PC-9 (cell line): ENCODE measurements at regions of chr7 and their contacts with region 1.

Region 1: DNA sequence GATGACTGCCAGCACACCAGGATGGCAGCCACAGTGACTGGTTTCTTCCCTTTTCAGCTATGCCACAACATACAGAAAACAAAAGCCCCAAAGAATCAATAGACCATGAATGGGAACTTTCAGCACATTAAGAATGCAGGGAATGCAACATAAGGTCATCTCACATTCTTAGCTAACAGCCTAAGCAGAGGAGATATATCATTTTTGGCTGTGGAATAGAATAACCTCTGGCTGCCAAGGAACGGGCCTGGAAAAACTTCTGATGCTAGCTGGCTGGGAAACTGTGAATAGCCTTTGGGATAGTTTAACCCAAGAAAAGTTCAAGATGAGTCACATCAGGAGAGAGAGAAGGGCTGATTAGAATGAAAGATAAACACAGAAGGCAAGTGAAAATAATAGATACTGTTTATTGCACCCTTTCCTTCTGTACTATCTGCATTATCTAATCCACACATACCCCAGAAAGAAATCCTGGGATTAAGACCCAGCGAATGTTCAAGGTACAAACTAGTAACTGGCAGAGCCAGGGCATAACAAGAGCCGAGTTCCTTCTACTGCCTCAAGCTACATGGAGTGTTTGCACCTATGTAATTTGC is 169.2 kb downstream of the SEMA3A start:
- DNase-seq: peak; percentile 77 to 96
- H3K4me3 ChIP-seq: no peak overlapping the region
- H3K27ac ChIP-seq: peak overlapping the region; percentile 80
- H3K4me1 ChIP-seq: peaks cover 42% of the 10 kb centered on the region
- H3K27me3 ChIP-seq: no peaks in the 10 kb centered on the region
- CTCF ChIP-seq: no peak

Region 2: DNA sequence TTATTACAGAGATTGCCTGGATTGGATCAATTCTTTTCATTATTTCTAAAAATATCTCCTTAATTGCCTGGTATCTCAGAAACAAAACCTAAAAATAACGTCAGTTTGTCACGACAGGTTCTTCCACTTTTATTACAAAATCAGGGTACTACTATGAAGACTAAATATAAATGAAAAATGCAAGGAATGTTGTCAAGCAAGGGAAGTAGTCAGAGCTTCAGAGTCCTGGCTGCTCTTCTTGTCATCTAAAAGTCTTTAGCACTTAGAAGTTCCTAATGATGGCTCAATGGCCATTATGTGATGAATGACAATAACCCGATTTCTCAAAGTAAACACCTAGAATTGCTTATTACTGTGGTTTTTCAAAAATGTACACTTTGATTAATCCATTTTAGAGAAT is 23.1 kb before region 1 on chr7:
- CTCF ChIA-PET with region 1: no interaction called
- POLR2A ChIA-PET with region 1: no interaction called
- intact Hi-C with region 1: loop called (anchors 2 kb)
- DNase-seq: peak in 1 of 2 experiments; percentile 87
- H3K4me3 ChIP-seq: 0 out of 2 replicates have a peak overlapping the region, but pooled peaks have one; percentile 18
- H3K27ac ChIP-seq: peak overlapping the region; percentile 56; the same call in 1 of the 2 replicates
- H3K4me1 ChIP-seq: peaks cover 29% of the 10 kb centered on the region
- H3K27me3 ChIP-seq: no peaks in the 10 kb centered on the region
- CTCF ChIP-seq: no peak

Region 3: DNA sequence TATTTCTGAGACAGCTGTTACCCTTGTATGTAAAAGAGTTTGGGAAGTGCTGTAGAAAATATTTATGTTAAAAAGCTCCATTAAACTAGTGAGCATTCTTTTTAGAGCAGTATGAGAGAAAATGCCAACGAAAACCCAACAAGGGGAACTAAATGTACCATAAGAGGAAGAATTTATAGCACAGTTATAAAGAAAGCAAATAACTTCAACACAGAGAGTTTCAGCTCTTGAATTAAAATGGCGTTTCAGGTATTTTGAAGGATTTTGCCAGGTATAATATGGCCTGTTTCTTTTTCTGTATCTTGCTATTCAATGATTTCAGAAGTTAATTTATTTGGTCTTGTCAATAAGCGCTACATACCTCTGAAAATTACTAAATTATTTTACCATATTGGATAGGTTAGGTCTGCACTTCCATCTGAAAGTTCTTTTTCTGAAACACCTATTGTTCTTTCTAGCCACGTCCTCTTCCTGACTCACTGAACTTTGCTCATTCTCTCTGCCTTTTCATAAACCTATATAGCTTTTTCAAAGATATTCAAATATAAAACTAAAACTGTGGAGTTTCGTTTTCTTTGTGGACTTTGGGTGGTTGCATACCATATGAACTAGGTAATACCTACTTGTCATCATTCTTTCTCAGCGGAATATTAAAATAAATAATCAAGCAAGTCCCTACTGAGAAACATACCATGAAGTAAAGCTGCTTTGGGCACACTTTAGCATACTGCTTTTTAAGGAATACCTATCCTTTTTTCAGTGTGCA is 33.1 kb after region 1 on chr7:
- CTCF ChIA-PET with region 1: no interaction called
- POLR2A ChIA-PET with region 1: no interaction called
- intact Hi-C with region 1: loop called (anchors 1 kb)
- DNase-seq: no peak
- H3K4me3 ChIP-seq: no peak overlapping the region
- H3K27ac ChIP-seq: 0 out of 2 replicates have a peak overlapping the region, but pooled peaks have one; percentile 1
- H3K4me1 ChIP-seq: peaks cover 28% of the 10 kb centered on the region
- H3K27me3 ChIP-seq: no peaks in the 10 kb centered on the region
- CTCF ChIP-seq: no peak

Region 4: DNA sequence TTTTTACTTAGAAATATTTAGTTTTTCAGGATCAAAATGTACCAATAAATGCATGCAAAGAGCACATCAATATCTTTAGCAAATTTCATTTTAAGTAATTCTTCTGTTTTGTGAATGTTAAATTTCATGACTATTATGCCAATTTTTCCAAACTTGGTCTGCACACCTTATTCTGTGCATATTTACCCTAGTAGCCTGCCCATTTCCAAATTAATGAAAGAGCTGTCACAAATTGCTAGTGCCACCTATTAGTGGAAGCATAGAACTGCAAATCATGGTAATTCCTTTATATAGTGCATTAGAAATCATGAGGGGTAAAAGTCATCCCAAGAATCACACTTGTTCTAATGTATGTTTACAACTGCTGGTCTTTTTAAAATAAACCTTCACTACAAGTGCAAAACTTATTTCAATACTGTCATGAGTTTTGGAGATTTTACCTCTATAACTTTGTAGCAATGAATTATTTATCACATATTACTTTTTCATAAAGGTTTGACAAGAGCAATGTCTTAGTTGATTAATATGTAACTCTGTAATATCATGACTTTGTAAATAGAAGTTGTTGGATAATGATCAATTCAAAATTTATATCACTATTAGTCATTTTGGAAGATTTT is 163.5 kb after region 1 on chr7:
- CTCF ChIA-PET with region 1: interaction called, 3 read pairs
- POLR2A ChIA-PET with region 1: no interaction called
- intact Hi-C with region 1: loop called (anchors 1 kb)
- DNase-seq: no peak
- H3K4me3 ChIP-seq: no peak overlapping the region
- H3K27ac ChIP-seq: peak overlapping the region; percentile 81
- H3K4me1 ChIP-seq: peaks cover 18% of the 10 kb centered on the region
- H3K27me3 ChIP-seq: no peaks in the 10 kb centered on the region
- CTCF ChIP-seq: peak; percentile 37; the same call in 1 of the 2 replicates

Region 5: GRCh38 chr7:84302949-84303348 is 277.5 kb after region 1 on chr7:
- CTCF ChIA-PET with region 1: no interaction called
- POLR2A ChIA-PET with region 1: no interaction called
- intact Hi-C with region 1: loop called (anchors 2 kb)
- DNase-seq: peak in 1 of 2 experiments; percentile 19
- H3K4me3 ChIP-seq: no peak overlapping the region
- H3K27ac ChIP-seq: no peak overlapping the region
- H3K4me1 ChIP-seq: no peaks in the 10 kb centered on the region
- H3K27me3 ChIP-seq: no peaks in the 10 kb centered on the region
- CTCF ChIP-seq: no peak

Region 6: DNA sequence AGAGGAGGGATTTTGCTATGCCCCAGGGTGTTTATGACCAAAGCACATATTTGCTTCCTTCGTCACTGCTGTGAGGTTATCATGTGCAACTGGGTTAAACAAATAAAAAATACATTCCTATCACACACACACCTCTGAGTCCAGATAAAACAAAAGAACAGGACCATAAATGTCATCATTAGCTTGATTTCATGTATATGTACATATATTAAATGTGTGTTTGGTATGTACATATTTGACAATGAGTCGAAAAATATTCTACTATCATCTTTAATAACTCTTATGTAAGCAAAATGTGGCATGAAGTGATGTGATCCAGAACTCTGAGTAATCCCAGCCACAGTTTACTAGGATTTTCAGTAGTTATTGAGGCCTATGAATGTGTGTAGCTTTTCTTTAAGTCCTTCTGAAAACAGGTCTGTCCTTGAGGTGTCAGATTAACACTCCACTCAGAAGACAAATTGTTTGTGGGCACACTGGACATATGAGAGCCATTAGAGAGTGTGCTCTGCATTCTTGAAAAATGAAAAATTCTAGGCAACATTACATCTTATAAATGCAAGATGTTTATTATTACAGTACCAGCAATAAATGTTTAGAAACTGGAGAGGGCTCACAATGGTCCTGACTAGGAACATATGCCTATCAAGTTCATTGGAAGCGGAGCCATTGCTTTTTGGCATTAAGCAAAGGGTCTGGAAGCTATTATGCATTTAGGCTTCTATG is 504.2 kb after region 1 on chr7:
- CTCF ChIA-PET with region 1: no interaction called
- POLR2A ChIA-PET with region 1: interaction called, 3 read pairs
- intact Hi-C with region 1: loop called (anchors 1 kb)
- DNase-seq: peak; percentile 63 to 89
- H3K4me3 ChIP-seq: no peak overlapping the region
- H3K27ac ChIP-seq: peak overlapping the region; percentile 66
- H3K4me1 ChIP-seq: peaks cover 27% of the 10 kb centered on the region
- H3K27me3 ChIP-seq: no peaks in the 10 kb centered on the region
- CTCF ChIP-seq: no peak

Region 7: DNA sequence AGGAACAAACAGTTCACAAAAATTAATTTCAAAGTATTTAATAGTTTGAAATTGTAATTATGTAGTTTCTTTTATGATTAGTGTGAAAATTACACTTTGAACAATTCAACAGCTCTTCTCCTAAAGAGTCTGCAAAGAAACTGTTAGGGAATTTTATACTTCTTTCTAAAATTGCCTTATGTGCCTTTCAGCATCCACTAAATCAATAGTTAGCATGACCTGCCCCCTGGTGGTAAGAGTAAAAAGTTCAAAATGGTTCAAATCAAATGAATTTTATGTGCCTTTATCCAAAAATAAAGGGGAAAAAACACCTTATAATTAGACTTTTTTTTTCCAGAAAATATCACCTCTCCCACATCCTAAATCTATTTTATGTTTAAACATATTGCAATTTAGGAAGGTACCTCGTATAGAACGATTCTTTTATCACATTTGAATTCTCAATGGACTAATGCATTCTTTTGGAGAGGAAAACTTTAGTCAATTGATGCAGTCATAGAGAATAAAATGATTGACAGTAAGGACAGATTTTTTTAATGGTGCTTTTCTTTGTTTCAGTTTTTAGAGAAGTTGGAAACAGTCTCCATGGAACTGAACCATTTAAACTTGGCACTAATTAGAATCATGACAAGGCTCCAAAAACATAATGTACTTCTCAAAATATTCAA is 997.7 kb after region 1 on chr7:
- CTCF ChIA-PET with region 1: no interaction called
- POLR2A ChIA-PET with region 1: no interaction called
- intact Hi-C with region 1: loop called (anchors 2 kb)
- DNase-seq: peak in 1 of 2 experiments; percentile 20
- H3K4me3 ChIP-seq: no peak overlapping the region
- H3K27ac ChIP-seq: no peak overlapping the region
- H3K4me1 ChIP-seq: no peaks in the 10 kb centered on the region; the same call in 1 of the 2 replicates
- H3K27me3 ChIP-seq: no peaks in the 10 kb centered on the region
- CTCF ChIP-seq: peak; percentile 87